Motor neuron (in vitro differentiated cells): ENCODE measurements at regions of chr4 and their contacts with region 1.

Region 1: DNA sequence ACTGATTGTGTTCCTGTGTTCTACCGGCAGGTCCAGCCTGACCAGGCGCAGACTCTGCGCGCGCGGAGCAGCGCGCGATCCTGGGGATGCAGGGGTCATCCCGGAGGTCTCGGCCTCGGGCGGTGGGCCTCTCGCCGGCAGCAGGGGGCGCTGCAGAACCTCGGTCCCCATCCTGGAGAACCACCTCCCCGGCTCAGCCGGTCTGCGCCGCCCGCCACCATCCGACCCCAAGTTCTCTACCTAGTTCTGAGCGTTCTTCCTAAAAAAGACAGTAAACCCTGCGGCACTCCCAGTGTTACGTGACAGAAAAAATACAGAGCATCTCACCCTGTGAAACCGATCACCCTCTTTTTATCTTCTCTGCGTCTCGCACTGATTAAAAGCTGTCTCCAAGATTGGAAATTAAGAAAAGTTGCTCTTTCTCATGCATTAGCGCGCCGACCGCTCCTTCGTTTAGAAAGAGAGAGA is 1.6 kb downstream of the TRPC3 start:
- ATAC-seq: peak; percentile 77 to 88 (median 87)
- H3K4me3 ChIP-seq: peak overlapping the region; percentile 54 to 77 (median 66)
- H3K27ac ChIP-seq: no peak overlapping the region
- H3K4me1 ChIP-seq: peaks cover 0 to 4% of the 10 kb centered on the region in 2 donors

Region 2: DNA sequence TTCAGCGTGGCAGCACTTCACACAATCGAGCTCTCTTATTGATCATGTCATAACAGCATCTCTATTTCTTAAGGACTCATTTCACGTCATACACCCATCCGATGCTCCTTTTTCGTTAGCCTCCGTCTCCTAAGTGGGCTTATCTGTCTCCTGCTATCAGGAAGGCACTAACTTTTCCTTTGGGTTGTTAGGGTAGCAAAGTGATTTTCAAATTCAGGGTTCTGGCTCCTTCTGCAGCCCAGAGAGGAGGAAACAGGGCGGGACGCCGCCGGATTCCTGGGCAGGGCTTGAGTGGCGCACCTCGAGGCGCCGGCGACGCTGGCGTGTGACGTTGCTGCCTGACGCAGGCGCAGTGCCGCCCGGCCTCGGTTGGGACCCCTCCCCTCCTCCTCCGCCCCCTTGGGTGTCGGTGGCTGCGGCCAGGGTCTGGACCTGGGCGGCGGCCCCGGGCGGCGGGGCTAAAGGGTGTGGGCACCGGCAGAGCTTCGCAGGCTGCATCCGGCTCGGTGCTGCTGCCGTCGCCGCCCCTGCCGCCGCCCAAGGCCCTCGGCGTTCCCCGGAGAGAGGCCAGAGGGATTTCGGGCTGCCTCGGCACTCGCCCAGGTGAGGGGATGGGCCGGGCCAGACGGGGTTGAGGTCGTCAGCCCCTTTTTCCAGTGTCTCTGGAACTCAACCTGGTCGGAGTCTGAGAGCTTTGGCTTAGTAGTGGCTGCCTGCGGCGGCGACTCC is 201.9 kb after region 1 on chr4 and contains the start of gene BLTP1:
- in situ Hi-C with region 1: loop called in 1 of 9 experiments (anchors 25 kb)
- ATAC-seq: peak; percentile 92 to 98 (median 96)
- H3K4me3 ChIP-seq: peak within 1 kb of the TSS; percentile 71 to 95 (median 94)
- H3K27ac ChIP-seq: peak within 1 kb of the TSS; percentile 81 to 82
- H3K4me1 ChIP-seq: peaks cover 3 to 13% of the 10 kb centered on the region in 2 donors
- total RNA-seq, gene BLTP1: 28.8 to 83.8 (median 64.4) TPM

Region 3: DNA sequence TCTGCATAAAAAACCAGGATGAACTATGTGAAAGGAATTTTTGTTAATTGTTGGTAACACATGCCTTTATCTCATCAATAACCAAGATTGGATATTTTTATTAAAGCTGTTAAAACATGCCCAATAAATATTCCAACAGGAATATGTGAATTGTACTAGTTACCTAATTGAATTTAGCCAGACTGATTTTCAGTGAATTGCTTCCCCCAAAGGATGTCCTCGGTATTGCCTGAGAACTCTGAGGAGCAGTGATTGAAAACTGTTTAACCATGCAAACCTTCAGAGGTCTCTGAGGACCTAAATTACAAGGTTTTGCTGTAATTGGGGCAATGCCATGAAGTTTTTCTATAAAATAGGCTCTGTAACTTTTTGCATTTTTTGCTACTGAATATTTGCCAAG is 268.5 kb after region 1 on chr4:
- in situ Hi-C with region 1: loop called in 1 of 9 experiments (anchors 25 kb)
- ATAC-seq: peak in 2 of 8 experiments; percentile 37 to 41
- H3K4me3 ChIP-seq: no peak overlapping the region
- H3K27ac ChIP-seq: no peak overlapping the region
- H3K4me1 ChIP-seq: no peaks in the 10 kb centered on the region